Endothelial cell of umbilical vein (primary cell): ENCODE measurements at regions of chr17 and their contacts with region 1.

Region 1: GRCh38 chr17:5249615-5250014 is 15.0 kb upstream of the SCIMP start:
- DNase-seq: peak; percentile 75
- H3K4me3 ChIP-seq: no peak overlapping the region
- H3K27ac ChIP-seq: no peak overlapping the region
- H3K4me1 ChIP-seq: no peaks in the 10 kb centered on the region
- H3K27me3 ChIP-seq: no peaks in the 10 kb centered on the region
- CTCF ChIP-seq: peak; percentile 56 to 66
- POLR2A ChIP-seq: no peak

Region 2: GRCh38 chr17:5237541-5238016 is 12.0 kb before region 1 on chr17:
- CTCF ChIA-PET with region 1: interaction called, 10 read pairs
- POLR2A ChIA-PET with region 1: no interaction called
- dilution Hi-C with region 1: no loop called
- intact Hi-C with region 1: no loop called
- DNase-seq: peak; percentile 64
- H3K4me3 ChIP-seq: no peak overlapping the region
- H3K27ac ChIP-seq: no peak overlapping the region
- H3K4me1 ChIP-seq: no peaks in the 10 kb centered on the region
- H3K27me3 ChIP-seq: no peaks in the 10 kb centered on the region
- CTCF ChIP-seq: peak; percentile 76 to 77
- POLR2A ChIP-seq: no peak

Region 3: DNA sequence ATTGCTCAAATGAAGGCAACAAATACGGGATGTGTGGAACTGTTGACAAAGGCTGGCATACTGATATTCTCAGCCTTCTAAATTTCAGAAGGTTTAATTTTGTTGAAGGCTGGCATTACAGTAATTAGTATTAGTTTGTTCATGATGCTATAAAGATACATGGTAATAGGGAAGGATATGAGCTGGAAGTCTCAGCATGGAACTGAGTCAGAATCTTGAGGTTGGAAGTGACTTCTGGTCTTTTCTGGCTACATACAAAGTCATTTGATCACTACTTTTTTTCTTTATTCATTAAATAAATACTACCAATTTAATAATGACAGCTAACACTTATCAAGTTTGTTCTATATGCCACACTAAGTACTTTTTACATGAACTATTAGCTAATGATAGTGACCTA is 55.0 kb after region 1 on chr17:
- CTCF ChIA-PET with region 1: interaction called, 4 read pairs
- POLR2A ChIA-PET with region 1: no interaction called
- dilution Hi-C with region 1: no loop called
- intact Hi-C with region 1: loop called (anchors 2 kb)
- DNase-seq: no peak
- H3K4me3 ChIP-seq: no peak overlapping the region
- H3K27ac ChIP-seq: no peak overlapping the region
- H3K4me1 ChIP-seq: no peaks in the 10 kb centered on the region
- H3K27me3 ChIP-seq: no peaks in the 10 kb centered on the region
- CTCF ChIP-seq: no peak
- POLR2A ChIP-seq: no peak

Region 4: GRCh38 chr17:5364156-5364555 is 114.5 kb after region 1 on chr17:
- CTCF ChIA-PET with region 1: no interaction called
- POLR2A ChIA-PET with region 1: no interaction called
- dilution Hi-C with region 1: no loop called
- intact Hi-C with region 1: loop called (anchors 10 kb)
- DNase-seq: no peak
- H3K4me3 ChIP-seq: no peak overlapping the region
- H3K27ac ChIP-seq: no peak overlapping the region
- H3K4me1 ChIP-seq: no peaks in the 10 kb centered on the region
- H3K27me3 ChIP-seq: no peaks in the 10 kb centered on the region
- CTCF ChIP-seq: no peak
- POLR2A ChIP-seq: no peak

Region 5: DNA sequence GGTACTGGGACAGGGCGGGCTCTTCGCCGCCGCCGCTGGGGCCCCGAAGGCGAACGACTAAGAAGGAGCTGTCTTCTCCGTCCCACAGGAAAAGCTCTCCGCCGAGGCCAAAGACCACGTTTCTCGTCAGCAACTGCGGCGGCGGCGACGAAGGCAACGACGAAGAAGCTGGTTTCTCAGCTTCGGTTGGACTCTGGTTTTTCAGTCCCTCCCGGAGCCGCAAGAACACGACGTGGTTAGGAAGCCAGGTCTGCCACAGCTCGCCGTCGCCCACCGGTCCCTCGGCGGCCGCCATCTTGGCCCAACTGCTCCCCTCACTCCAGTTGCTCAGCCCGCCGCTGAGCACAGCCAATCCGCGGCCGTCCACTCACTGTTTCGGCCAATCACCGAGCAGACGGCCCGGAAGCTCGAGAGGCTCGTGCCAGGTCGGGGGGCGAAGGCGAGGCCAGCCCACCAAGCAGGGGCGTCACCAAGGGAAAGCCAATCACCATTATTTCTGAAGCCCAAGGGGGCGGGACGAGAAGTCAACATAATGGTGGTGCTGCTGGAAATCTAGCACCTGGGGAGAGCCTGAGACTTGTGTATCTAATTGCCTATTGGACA is 169.8 kb after region 1 on chr17 and contains the start of gene NUP88:
- CTCF ChIA-PET with region 1: no interaction called
- POLR2A ChIA-PET with region 1: no interaction called
- dilution Hi-C with region 1: no loop called
- intact Hi-C with region 1: loop called (anchors 5 kb)
- DNase-seq: peak; percentile 99
- H3K4me3 ChIP-seq: peak within 1 kb of the TSS; percentile 75 to 94 (median 89)
- H3K27ac ChIP-seq: peak within 1 kb of the TSS; percentile 79
- H3K4me1 ChIP-seq: peaks cover 13% of the 10 kb centered on the region
- H3K27me3 ChIP-seq: no peaks in the 10 kb centered on the region
- CTCF ChIP-seq: no peak
- POLR2A ChIP-seq: peak; percentile 49
- total RNA-seq, gene NUP88: 87.4 and 95.8 TPM in 2 replicates

Region 6: GRCh38 chr17:5438716-5439445 is 189.3 kb after region 1 on chr17 and contains the start of gene C1QBP:
- CTCF ChIA-PET with region 1: interaction called, 41 read pairs
- POLR2A ChIA-PET with region 1: no interaction called
- dilution Hi-C with region 1: no loop called
- intact Hi-C with region 1: loop called (anchors 1 kb)
- DNase-seq: peak; percentile 96
- H3K4me3 ChIP-seq: peak within 1 kb of the TSS; percentile 64 to 94 (median 68)
- H3K27ac ChIP-seq: peak within 1 kb of the TSS; percentile 47
- H3K4me1 ChIP-seq: peaks cover 17% of the 10 kb centered on the region
- H3K27me3 ChIP-seq: no peaks in the 10 kb centered on the region
- CTCF ChIP-seq: peak; percentile 99
- POLR2A ChIP-seq: peak; percentile 91
- total RNA-seq, gene C1QBP: 201 and 218 TPM in 2 replicates

Region 7: GRCh38 chr17:6435968-6436367 is 1186.4 kb after region 1 on chr17:
- CTCF ChIA-PET with region 1: interaction called, 13 read pairs
- POLR2A ChIA-PET with region 1: no interaction called
- dilution Hi-C with region 1: no loop called
- intact Hi-C with region 1: loop called (anchors 10 kb)
- DNase-seq: peak; percentile 51
- H3K4me3 ChIP-seq: no peak overlapping the region
- H3K27ac ChIP-seq: no peak overlapping the region
- H3K4me1 ChIP-seq: no peaks in the 10 kb centered on the region
- H3K27me3 ChIP-seq: peaks cover 4 to 20% of the 10 kb centered on the region in 2 experiments
- CTCF ChIP-seq: peak; percentile 76 to 79
- POLR2A ChIP-seq: no peak